Right ventricle myocardium inferior (tissue), 1 donor: ENCODE measurements at regions of chr2 and their contacts with region 1.

Region 1: DNA sequence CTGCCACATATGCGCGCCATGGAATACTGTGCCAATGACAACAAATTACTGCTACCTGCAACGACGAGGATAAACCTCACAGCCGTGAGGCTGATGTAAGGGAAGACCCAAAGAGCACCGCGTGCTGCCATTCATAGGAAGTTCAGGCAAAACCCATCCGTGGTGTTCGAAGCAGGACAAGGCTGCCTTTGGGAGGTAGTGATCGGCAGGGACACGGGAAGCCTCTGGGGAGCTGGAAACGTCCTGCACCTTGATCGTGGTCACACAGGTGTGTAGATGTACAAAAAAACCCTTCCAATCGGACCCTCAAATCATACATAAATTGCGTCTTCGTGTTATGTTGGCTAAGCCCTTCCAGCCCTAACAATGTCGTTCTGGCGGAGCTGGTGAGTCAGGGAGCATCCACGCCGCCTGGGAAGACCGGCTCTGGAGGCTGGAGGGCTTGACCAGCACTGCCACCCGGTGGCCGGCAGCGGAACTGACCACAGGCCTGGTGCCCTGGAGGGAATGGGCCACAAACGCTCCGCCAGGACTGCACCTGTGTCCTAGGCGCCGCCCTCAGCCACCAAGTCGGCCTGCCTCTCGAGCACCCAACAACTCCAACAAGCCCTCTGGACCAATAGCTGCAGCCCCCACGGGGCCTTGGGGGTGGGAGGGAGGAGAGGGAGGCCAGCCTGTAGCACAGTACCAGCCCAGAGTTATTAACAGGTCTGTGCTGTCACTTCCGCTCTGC is 4.1 kb upstream of the NEURL3 start:
- DNase-seq: peak; percentile 93
- ATAC-seq: peak; percentile 92

Region 2: DNA sequence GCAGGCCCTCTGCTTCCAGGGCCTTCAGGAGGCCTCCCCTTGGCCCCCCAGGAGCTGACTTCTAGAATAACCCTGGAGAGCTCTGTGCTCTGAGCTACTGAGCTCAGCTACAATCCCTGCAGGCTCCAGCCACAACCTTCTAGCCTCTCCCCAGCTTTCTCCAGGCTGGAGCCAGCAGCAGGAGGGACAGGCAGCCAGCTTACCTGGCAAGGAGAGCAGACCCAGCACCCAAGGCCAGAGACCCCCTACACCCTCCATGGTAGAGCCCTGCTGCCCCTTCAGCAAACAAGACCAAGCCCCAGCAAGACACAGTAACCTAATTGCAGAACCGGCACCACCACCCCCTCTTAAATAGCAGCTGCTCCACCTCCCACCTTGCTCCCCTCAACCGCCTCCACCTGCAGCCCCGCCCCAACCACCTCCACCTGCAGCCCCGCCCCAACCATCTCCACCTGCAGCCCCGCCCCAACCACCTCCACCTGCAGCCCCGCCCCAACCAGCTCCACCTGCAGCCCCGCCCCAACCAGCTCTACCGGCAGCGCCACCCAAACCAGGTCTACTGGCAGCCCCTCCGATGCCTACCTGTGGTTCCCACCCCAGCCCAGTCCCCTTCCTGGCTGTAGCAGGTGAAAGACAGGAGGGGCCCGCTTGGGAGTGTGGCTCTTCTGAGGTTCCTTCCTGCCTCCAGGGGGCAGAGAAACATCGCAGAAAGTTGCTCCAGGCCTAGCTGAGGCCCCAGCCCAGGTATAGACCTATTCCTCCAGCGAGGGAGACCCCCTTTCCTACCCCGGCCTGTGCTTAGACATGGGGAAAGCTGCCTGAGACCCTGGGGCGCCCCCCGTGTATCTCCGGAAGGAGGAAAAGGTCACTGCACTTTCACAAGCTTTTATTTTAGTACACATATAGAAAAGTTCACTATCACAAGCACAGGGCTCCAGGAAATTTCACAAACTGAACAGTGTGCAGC is 370.8 kb before region 1 on chr2 and contains the start of gene ASTL:
- intact Hi-C with region 1: loop called (anchors 2 kb)
- DNase-seq: no peak
- ATAC-seq: peak; percentile 55
- total RNA-seq, gene ASTL: not detected

Region 3: GRCh38 chr2:96305091-96305978 is 203.9 kb before region 1 on chr2 and contains the start of gene SNRNP200:
- intact Hi-C with region 1: loop called (anchors 2 kb)
- DNase-seq: peak; percentile 94
- ATAC-seq: peak; percentile 99
- total RNA-seq, gene SNRNP200: 50.9 TPM

Region 4: GRCh38 chr2:96336104-96336775 is 173.0 kb before region 1 on chr2:
- intact Hi-C with region 1: loop called (anchors 5 kb)
- DNase-seq: no peak
- ATAC-seq: no peak

Region 5: GRCh38 chr2:96359310-96359709 is 150.0 kb before region 1 on chr2:
- intact Hi-C with region 1: loop called (anchors 5 kb)
- DNase-seq: no peak
- ATAC-seq: no peak

Region 6: DNA sequence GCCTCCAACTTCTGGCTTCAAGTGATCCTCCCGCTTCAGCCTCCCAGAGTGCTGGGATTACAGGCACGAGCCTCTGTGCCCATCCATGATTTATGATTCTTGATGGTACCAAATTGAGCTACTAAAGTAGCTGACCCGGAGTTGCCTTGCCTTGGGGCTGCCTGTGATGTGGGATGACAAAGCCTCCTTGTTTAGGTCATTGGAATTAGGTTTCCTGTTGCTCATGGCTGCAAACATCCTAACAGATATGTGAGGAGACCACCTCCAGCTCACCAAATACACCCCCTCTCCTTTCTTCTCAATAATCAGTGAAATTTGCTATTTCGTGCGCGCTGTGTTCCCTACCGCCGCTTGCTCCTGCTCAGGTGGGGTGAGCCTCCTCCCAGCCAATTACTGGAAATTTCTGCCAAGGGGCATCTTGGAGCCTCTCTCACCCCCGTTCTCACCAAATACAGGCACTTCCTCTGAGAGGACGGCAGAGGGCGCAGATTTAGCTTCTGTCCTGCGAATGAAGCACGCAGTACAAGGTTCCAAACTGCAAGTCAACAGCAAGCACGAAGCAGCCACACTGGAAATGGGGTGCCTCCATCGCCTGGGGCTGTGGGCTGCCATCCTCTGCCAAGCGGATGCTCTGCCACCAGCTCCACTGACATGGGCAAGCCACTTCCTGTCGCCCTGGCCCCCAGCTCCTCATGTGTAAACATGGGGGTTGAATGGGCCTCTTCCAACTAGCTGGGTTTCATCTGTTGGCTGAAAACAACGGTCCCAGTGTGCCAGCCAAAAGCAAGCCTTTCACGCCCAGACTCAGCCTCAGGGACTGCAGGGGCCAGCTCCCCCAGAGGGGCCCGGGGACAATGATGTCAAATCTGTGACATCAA is 102.0 kb before region 1 on chr2:
- intact Hi-C with region 1: loop called (anchors 1 kb)
- DNase-seq: peak; percentile 75
- ATAC-seq: peak; percentile 37

Region 7: GRCh38 chr2:96470636-96471035 is 38.6 kb before region 1 on chr2:
- intact Hi-C with region 1: loop called (anchors 2 kb)
- DNase-seq: peak; percentile 74
- ATAC-seq: peak; percentile 74

Region 8: GRCh38 chr2:96485751-96486651 is 23.3 kb before region 1 on chr2:
- intact Hi-C with region 1: no loop called
- DNase-seq: peak; percentile 83
- ATAC-seq: peak; percentile 80